Ascending aorta (tissue), 2 donors: ENCODE measurements at regions of chr13 and their contacts with region 1.

Region 1: GRCh38 chr13:111202745-111203144 is 87.6 kb downstream of the ARHGEF7 start:
- DNase-seq: peak in 1 of 2 donors; percentile 69
- H3K4me3 ChIP-seq: peak overlapping the region in 1 of 2 donors; percentile 47
- H3K27ac ChIP-seq: peak overlapping the region; percentile 52 to 62
- H3K4me1 ChIP-seq: peaks cover 15 to 61% of the 10 kb centered on the region in 2 donors
- H3K27me3 ChIP-seq: no peaks in the 10 kb centered on the region
- CTCF ChIP-seq: no peak

Region 2: DNA sequence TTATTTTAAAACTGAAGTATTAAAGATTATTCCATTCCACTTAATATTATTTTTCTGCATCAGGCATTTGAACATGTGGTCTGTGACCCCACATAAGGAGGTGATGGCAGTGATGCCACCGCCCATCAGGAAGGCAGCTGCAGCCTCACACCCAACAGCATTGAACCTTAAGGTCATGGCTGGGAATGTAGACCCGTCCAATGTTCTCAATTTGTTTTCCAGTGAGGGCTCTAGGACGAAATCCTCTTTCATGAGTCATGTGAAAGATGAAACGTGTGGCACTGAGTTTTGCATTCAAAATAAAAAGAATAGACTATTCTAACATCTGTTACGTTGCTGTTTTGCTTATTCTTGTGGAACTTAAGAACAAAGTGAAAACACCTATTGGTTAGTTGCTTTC is 213.4 kb before region 1 on chr13:
- intact Hi-C with region 1: no loop called
- DNase-seq: no peak
- H3K4me3 ChIP-seq: no peak overlapping the region
- H3K27ac ChIP-seq: no peak overlapping the region
- H3K4me1 ChIP-seq: no peaks in the 10 kb centered on the region
- H3K27me3 ChIP-seq: no peaks in the 10 kb centered on the region
- CTCF ChIP-seq: no peak

Region 3: DNA sequence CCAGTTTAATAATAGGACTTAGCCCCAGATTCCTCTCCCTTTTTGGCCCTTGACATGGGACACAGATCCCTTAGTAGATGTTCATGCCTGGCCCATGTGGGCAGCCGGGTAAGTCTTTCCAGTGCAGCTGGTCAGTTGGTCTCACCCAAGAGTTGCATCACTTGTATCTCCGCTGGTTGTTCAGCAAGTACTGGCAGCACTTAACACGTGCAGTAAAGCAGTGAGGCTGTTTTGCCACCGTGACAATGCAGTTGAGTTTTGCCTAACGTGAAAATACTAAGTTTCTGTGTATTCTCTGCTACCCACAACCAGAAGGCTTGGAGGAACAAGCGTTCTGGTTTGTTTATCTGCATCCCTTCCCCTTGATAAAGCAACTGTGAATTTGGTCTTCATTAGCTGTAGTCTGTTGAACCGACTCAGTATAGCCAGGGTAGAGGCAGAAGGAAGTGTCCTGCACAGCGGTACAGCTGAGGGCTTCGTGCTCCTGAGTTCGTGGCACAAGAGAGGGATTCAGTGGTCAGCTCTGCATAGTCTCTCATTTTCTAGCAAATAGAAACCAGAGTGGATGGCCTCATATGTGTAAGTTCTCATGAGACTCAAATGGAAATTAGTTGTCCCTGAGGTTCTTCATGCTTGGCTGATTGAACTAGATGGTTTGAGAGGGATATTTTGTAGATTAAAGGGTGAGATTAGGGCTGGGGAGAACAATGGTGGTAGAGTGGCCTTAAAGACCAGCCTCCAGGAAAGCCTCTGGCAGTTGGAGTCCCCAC is 37.3 kb before region 1 on chr13:
- intact Hi-C with region 1: no loop called
- DNase-seq: no peak
- H3K4me3 ChIP-seq: no peak overlapping the region
- H3K27ac ChIP-seq: no peak overlapping the region
- H3K4me1 ChIP-seq: peaks cover 0 to 11% of the 10 kb centered on the region in 2 donors
- H3K27me3 ChIP-seq: no peaks in the 10 kb centered on the region
- CTCF ChIP-seq: no peak

Region 4: GRCh38 chr13:111187960-111188541 is 14.7 kb before region 1 on chr13:
- intact Hi-C with region 1: loop called (anchors 2 kb)
- DNase-seq: no peak
- H3K4me3 ChIP-seq: peak overlapping the region; percentile 21 to 59
- H3K27ac ChIP-seq: peak overlapping the region; percentile 86 to 94
- H3K4me1 ChIP-seq: peaks cover 19 to 51% of the 10 kb centered on the region in 2 donors
- H3K27me3 ChIP-seq: no peaks in the 10 kb centered on the region
- CTCF ChIP-seq: no peak

Region 5: GRCh38 chr13:111429064-111429558 is 226.4 kb after region 1 on chr13:
- intact Hi-C with region 1: no loop called
- DNase-seq: no peak
- H3K4me3 ChIP-seq: no peak overlapping the region
- H3K27ac ChIP-seq: no peak overlapping the region
- H3K4me1 ChIP-seq: no peaks in the 10 kb centered on the region
- H3K27me3 ChIP-seq: no peaks in the 10 kb centered on the region
- CTCF ChIP-seq: peak in 2 of 3 experiments; percentile 24 to 39